ENCODE measurements at regions of chr17 and their contacts with region 1.

Region 1: GRCh38 chr17:3647769-3648555 is 11.4 kb downstream of the CTNS start:
- DNase-seq: peak; percentile 32
- H3K4me3 ChIP-seq: no peak overlapping the region
- H3K27ac ChIP-seq: no peak overlapping the region
- H3K4me1 ChIP-seq: no peaks in the 10 kb centered on the region
- H3K27me3 ChIP-seq: no peaks in the 10 kb centered on the region
- CTCF ChIP-seq: peak in 3 of 4 experiments; percentile 22 to 47 (median 24)
- POLR2A ChIP-seq: no peak

Region 2: DNA sequence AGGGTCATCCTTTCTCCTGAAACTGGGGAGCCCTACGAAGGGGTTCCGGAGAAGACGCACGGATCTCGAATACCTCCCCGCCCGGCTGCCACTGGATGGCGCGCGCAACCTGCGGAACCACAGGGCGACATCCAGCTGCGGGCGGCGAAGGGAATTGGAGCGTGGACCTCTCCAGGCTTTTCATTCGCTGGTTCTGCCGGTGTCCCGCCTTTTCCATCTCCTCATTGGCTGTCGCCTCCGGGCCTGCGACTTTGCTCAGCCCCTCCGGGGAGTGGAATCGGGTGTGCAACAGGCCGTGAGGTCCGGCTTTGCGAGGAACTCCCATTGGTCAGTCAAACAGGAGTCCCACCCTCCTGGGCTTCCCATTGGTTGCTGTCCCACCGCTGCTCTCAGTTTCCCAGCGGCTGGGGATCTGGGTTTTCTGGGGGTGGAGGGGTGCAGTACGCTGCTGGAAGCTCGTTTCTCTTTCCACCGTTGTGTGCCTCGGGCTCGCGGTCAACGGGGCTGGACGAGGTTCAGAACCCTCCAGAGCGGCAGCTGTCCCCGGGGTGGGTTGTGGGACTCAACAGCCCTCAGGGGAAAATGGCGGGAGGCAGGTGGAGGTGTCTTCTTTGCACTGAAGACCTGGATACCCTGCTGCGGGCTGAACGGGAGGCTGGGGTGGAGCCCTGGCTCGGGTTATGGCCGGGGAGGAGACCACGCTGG is 599.0 kb before region 1 on chr17:
- intact Hi-C with region 1: loop called (anchors 10 kb)
- DNase-seq: peak; percentile 97
- H3K4me3 ChIP-seq: peak overlapping the region; percentile 50 to 57
- H3K27ac ChIP-seq: peak overlapping the region; percentile 40 to 50
- H3K4me1 ChIP-seq: no peaks in the 10 kb centered on the region
- H3K27me3 ChIP-seq: no peaks in the 10 kb centered on the region
- CTCF ChIP-seq: peak; percentile 61 to 92 (median 88)
- POLR2A ChIP-seq: peak; percentile 37